Right lobe of liver (tissue), 6 donors: ENCODE measurements at regions of chr1 and their contacts with region 1.

Region 1: GRCh38 chr1:205255941-205256780 is 28.4 kb downstream of the TMCC2 start:
- DNase-seq: peak; percentile 84 to 88 (median 88)
- ATAC-seq: peak; percentile 93 to 98 (median 97)
- H3K4me3 ChIP-seq: no peak overlapping the region
- H3K27ac ChIP-seq: no peak overlapping the region
- H3K4me1 ChIP-seq: no peaks in the 10 kb centered on the region
- H3K27me3 ChIP-seq: no peaks in the 10 kb centered on the region
- CTCF ChIP-seq: peak; percentile 94 to 99 (median 96)
- POLR2A ChIP-seq: no peak

Region 2: DNA sequence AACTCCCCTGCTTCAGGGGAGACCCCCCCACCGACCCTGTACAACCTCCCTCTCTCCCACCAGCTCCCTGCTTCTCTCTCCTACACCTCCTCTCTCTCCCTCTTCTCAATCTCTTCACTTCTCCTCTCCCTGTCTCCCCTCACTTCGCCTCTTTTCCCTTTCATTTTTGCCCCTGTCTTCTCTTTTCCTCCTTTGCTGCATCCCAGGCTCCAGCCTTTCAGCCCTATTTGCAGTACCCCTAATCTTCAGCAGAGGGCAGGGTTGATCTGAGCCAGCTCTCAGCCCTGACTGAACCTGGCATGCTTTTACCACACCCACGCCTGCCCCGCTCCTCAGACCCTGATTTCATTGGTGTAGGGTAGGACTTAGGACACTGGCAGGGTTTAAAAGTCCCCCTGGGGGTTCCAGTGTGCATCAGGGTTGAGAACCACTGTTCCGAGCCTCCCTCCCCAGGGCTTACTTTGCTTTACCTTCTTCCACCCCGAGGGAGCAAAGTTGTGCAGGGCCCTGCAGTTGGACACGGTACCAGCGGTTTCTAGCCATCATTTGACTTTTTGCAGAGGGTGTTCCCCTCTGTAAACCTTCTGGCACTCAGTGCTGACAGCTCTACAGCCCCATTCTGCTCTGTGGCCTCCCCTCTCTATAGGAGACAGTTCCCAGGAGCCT is 280.5 kb before region 1 on chr1:
- intact Hi-C with region 1: loop called in 1 of 2 experiments (anchors 5 kb)
- DNase-seq: no peak
- ATAC-seq: peak; percentile 78 to 88 (median 84)
- H3K4me3 ChIP-seq: no peak overlapping the region
- H3K27ac ChIP-seq: no peak overlapping the region
- H3K4me1 ChIP-seq: no peaks in the 10 kb centered on the region
- H3K27me3 ChIP-seq: no peaks in the 10 kb centered on the region
- CTCF ChIP-seq: peak; percentile 77 to 81 (median 80)
- POLR2A ChIP-seq: no peak

Region 3: GRCh38 chr1:205061665-205062069 is 194.5 kb before region 1 on chr1:
- intact Hi-C with region 1: loop called in 1 of 2 experiments (anchors 10 kb)
- DNase-seq: peak in 2 of 3 donors; percentile 63 to 76
- ATAC-seq: peak; percentile 70 to 90 (median 87)
- H3K4me3 ChIP-seq: no peak overlapping the region
- H3K27ac ChIP-seq: no peak overlapping the region
- H3K4me1 ChIP-seq: no peaks in the 10 kb centered on the region
- H3K27me3 ChIP-seq: no peaks in the 10 kb centered on the region
- CTCF ChIP-seq: peak; percentile 86 to 94 (median 88)
- POLR2A ChIP-seq: no peak

Region 4: DNA sequence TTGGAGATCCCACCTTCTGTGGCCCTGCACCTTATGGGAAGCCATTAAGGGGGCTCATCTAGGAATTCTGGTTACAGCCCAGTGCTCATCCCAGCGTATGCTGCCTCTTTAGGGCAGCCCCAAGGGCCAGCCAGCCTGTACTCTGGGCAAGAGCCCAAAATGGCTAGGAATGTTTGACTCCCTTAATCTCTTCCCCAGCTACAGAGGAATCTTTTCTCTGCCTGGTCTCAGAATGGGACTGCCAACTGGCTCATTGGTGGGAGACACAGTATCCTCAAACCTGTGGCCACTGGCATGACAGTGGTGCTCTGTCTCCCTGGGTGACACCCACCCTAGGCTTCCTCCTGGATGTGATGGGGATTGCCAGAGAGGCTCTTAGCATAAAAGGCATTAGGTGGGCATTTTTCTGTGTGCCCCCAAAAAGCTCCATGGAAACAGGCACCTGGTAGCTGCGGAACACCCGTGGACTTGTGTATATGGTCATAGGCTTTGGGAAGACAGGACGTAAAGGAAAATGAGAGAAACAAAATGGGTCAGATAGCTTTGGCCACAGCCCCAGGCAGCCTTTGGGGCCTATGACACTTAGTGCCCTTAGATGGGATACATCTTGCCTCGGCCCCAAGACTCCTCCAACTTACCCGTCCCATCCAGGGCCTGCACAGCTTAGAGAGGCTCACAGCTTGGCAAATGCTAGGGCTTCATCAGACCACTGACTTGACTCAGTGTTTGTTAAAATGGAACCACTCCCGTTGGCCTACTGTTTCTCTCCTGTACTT is 178.8 kb before region 1 on chr1:
- intact Hi-C with region 1: loop called in 1 of 2 experiments (anchors 10 kb)
- DNase-seq: no peak
- ATAC-seq: no peak
- H3K4me3 ChIP-seq: no peak overlapping the region
- H3K27ac ChIP-seq: no peak overlapping the region
- H3K4me1 ChIP-seq: no peaks in the 10 kb centered on the region
- H3K27me3 ChIP-seq: no peaks in the 10 kb centered on the region
- CTCF ChIP-seq: no peak
- POLR2A ChIP-seq: no peak